Transverse colon (tissue), 4 donors: ENCODE measurements at regions of chr6 and their contacts with region 1.

Region 1: GRCh38 chr6:161057103-161058091 is 65.8 kb downstream of the MAP3K4 start:
- DNase-seq: no peak
- H3K4me3 ChIP-seq: no peak overlapping the region
- H3K27ac ChIP-seq: no peak overlapping the region
- H3K4me1 ChIP-seq: no peaks in the 10 kb centered on the region
- H3K27me3 ChIP-seq: no peaks in the 10 kb centered on the region
- CTCF ChIP-seq: no peak
- EP300 ChIP-seq: no peak
- POLR2A ChIP-seq: no peak

Region 2: DNA sequence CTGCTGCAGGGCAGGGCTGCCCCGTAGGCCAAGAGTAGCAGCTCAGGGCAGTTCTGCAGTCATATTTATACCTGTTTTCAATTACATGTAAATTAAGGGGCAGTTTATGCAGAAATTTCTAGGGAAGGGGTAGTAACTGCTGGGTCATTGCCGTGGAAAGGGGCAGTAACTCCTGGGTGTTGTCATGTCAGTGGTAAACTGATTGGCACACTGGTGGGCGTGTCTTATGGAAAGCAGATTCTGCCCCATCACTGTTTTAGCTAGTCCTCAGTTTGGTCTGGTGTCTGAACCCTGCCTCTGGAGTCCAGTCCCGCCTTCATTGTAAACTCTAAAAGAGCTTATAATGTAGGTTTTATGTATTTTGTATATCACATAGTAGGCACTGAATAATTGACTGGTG is 43.7 kb before region 1 on chr6:
- in situ Hi-C with region 1: no loop called
- intact Hi-C with region 1: loop called (anchors 2 kb)
- DNase-seq: no peak
- H3K4me3 ChIP-seq: no peak overlapping the region
- H3K27ac ChIP-seq: no peak overlapping the region
- H3K4me1 ChIP-seq: peaks cover 4 to 32% (median 8%) of the 10 kb centered on the region in 4 donors
- H3K27me3 ChIP-seq: no peaks in the 10 kb centered on the region
- CTCF ChIP-seq: no peak
- EP300 ChIP-seq: no peak
- POLR2A ChIP-seq: no peak

Region 3: DNA sequence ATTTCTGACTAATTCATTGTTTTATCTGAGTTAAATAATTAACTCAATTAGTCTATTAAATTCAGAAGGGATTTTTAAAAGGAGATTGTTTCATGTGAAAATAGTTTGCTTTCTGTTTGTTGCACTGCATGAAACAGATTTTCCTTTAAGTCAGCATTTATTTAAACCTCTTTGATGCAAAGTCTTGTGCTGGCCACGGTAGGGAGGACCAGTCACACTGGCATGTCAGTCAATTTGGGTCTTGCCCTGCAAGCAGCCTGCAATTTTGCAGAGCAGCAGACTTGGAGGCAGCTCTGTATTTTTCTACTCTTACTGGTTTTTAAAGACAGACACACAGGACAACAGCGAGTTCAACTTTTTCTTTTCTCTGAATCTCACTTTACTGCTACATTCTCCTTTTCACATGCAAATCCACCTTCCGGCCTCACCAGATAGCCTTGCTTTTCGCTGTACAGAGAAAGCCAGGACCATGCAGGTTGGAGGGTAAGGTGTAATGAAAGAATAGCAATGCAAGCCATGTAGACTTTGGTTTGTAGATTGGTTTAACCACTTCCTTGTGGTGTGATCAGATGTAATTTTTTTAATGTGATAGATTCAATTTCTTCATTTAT is 906.3 kb after region 1 on chr6:
- in situ Hi-C with region 1: no loop called
- intact Hi-C with region 1: no loop called
- DNase-seq: no peak
- H3K4me3 ChIP-seq: no peak overlapping the region
- H3K27ac ChIP-seq: no peak overlapping the region
- H3K4me1 ChIP-seq: no peaks in the 10 kb centered on the region
- H3K27me3 ChIP-seq: no peaks in the 10 kb centered on the region
- CTCF ChIP-seq: no peak
- EP300 ChIP-seq: no peak
- POLR2A ChIP-seq: no peak